ENCODE measurements at regions of chr17 and their contacts with region 1.

Region 1: GRCh38 chr17:56939901-56940343 is 20.9 kb downstream of the COIL start:
- DNase-seq: no peak
- H3K4me3 ChIP-seq: no peak overlapping the region
- H3K27ac ChIP-seq: no peak overlapping the region
- H3K4me1 ChIP-seq: no peaks in the 10 kb centered on the region
- H3K27me3 ChIP-seq: no peaks in the 10 kb centered on the region
- CTCF ChIP-seq: peak; percentile 38 to 75 (median 68)
- POLR2A ChIP-seq: no peak

Region 2: DNA sequence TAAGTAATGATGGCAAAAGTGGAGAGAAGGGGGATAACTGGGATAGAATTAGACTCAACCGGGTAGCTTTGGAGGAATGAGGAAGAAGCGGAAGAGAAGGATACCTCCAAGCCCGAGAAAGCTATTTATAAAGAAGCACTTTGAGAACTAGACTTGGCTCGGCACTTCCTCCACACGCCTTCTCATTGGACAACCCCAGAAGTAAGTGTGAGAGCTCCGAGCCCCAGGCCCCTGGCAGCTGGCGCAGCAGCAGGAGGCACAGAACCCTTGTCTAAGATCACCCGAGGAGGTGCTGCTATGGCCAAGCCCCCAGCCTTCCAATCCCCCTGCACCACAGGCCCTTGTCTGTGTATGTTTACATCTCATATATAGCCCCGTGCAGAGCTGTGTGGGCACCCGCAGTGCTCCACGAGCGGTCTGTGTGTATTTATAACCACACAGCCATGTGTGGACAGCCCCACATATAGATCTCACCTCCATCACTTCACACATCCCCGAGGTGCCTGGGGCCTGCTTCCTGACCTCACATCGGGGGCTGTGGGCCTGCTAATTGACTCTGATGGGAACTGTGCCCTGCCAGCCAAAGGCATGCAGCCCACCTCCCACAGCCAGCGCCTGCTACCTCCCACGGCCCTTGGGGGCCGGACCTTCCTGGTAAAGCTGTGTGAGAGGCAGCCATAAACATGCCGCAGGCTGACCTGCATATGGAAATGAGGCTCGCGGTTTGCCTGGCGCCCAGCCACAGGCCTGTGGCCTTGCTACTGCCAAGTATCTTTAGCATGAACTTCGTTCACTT is 202.4 kb before region 1 on chr17:
- intact Hi-C with region 1: no loop called
- DNase-seq: no peak
- H3K4me3 ChIP-seq: no peak overlapping the region
- H3K27ac ChIP-seq: no peak overlapping the region
- H3K4me1 ChIP-seq: no peaks in the 10 kb centered on the region
- H3K27me3 ChIP-seq: no peaks in the 10 kb centered on the region
- CTCF ChIP-seq: no peak
- POLR2A ChIP-seq: no peak

Region 3: GRCh38 chr17:56819431-56820145 is 120.3 kb before region 1 on chr17:
- intact Hi-C with region 1: loop called (anchors 2 kb)
- DNase-seq: peak; percentile 68
- H3K4me3 ChIP-seq: no peak overlapping the region
- H3K27ac ChIP-seq: no peak overlapping the region
- H3K4me1 ChIP-seq: no peaks in the 10 kb centered on the region
- H3K27me3 ChIP-seq: no peaks in the 10 kb centered on the region
- CTCF ChIP-seq: peak; percentile 74 to 88 (median 84)
- POLR2A ChIP-seq: no peak

Region 4: GRCh38 chr17:56880133-56880532 is 59.8 kb before region 1 on chr17:
- intact Hi-C with region 1: no loop called
- DNase-seq: no peak
- H3K4me3 ChIP-seq: no peak overlapping the region
- H3K27ac ChIP-seq: no peak overlapping the region
- H3K4me1 ChIP-seq: no peaks in the 10 kb centered on the region
- H3K27me3 ChIP-seq: no peaks in the 10 kb centered on the region
- CTCF ChIP-seq: no peak
- POLR2A ChIP-seq: no peak

Region 5: GRCh38 chr17:57071991-57072944 is 132.3 kb after region 1 on chr17:
- intact Hi-C with region 1: no loop called
- DNase-seq: no peak
- H3K4me3 ChIP-seq: no peak overlapping the region
- H3K27ac ChIP-seq: peak overlapping the region in 1 of 2 donors; percentile 38
- H3K4me1 ChIP-seq: peaks cover 3% of the 10 kb centered on the region
- H3K27me3 ChIP-seq: no peaks in the 10 kb centered on the region
- CTCF ChIP-seq: no peak
- POLR2A ChIP-seq: no peak

Region 6: DNA sequence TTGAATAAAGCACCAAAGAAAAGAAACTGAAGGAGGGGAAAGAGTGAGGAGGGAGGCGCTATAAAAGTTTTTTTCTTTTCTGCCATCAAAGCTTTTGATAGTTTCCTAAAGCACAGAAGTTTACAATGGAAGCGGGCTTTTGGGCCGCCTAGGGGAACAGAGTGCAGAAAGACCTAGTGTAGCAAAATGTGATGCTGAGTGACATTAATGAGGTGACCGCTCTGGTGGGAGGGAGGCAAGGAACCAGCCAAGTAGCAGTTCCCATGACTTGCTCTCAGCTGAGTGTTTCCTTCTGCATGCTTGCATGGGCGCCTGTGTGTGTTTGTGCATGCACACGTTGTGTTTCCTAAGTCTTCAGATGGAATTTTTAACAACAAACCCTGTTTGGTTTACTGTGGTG is 331.9 kb after region 1 on chr17:
- intact Hi-C with region 1: no loop called
- DNase-seq: peak; percentile 52
- H3K4me3 ChIP-seq: no peak overlapping the region
- H3K27ac ChIP-seq: peak overlapping the region; percentile 5 to 58
- H3K4me1 ChIP-seq: peaks cover 8% of the 10 kb centered on the region
- H3K27me3 ChIP-seq: no peaks in the 10 kb centered on the region
- CTCF ChIP-seq: no peak
- POLR2A ChIP-seq: peak; percentile 11

Measured in prostate gland (tissue), 2 donors.